Panc1 (cell line): ENCODE measurements at regions of chr5 and their contacts with region 1.

Region 1: GRCh38 chr5:175508896-175509295 is 30.5 kb downstream of the SFXN1 start:
- DNase-seq: no peak
- ATAC-seq: no peak
- H3K4me3 ChIP-seq: no peak overlapping the region
- H3K27ac ChIP-seq: no peak overlapping the region
- H3K4me1 ChIP-seq: no peaks in the 10 kb centered on the region
- H3K27me3 ChIP-seq: no peaks in the 10 kb centered on the region
- CTCF ChIP-seq: no peak

Region 2: GRCh38 chr5:175335691-175336090 is 173.2 kb before region 1 on chr5:
- CTCF ChIA-PET with region 1: no interaction called
- POLR2A ChIA-PET with region 1: interaction called, 10 read pairs
- in situ Hi-C with region 1: no loop called
- intact Hi-C with region 1: no loop called
- DNase-seq: no peak
- ATAC-seq: no peak
- H3K4me3 ChIP-seq: no peak overlapping the region
- H3K27ac ChIP-seq: no peak overlapping the region
- H3K4me1 ChIP-seq: no peaks in the 10 kb centered on the region
- H3K27me3 ChIP-seq: no peaks in the 10 kb centered on the region
- CTCF ChIP-seq: no peak